Thyroid gland (tissue), 4 donors: ENCODE measurements at regions of chr5 and their contacts with region 1.

Region 1: DNA sequence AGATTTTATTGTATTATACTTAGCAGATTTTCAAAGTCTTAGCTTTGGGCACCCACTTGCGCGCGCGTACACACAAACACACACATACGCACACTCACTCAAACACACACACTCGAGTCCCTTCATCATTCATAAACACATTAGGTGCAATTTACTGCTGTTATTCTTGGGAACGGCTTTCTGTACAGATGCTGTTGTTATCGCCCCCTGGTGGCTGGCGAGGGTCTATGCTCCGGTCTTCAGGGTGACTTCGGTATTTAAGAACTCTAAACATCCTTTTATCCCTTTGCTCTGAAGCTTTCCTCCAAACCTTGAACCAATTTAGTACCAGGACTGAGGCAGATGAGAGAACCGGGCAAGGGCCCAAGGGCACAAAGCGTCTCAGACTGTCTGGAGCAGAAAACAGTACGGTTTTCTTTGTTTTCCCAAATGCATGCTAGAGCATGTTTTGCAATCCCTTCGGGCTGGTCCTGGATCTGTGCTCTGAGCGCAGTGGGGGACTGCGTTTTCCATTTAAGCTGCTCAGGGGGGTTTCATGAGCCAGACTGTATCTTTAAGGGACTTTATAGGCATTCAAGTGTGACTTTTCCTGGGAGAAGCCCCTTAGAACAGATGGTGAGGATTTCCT is 1.7 kb upstream of the SLIT3 start:
- DNase-seq: peak; percentile 74 to 88
- H3K4me3 ChIP-seq: no peak overlapping the region
- H3K27ac ChIP-seq: no peak overlapping the region
- H3K4me1 ChIP-seq: peaks cover 0 to 8% of the 10 kb centered on the region in 2 donors
- H3K27me3 ChIP-seq: no peaks in the 10 kb centered on the region
- CTCF ChIP-seq: peak; percentile 60 to 92 (median 80)
- POLR2A ChIP-seq: no peak

Region 2: DNA sequence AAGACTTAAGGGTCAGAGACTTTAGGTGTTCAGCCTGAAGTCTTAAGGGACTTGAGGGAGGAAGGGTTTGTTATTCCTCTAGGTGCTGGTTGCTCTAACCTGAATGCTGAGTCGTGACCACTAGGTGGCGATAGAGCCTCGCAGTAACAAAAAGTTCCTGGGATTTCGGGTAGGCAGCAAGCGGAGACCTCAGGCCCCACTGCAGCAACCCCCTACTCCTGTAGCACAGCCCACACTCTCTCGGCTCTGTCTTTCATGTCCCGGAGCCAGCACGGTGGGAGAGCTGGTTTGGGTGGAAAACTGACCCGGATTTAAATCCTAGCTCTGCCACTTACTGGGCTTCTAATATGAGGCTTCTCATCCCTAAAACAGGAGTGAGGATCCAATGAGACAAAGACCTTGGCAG is 623.1 kb before region 1 on chr5:
- intact Hi-C with region 1: loop called (anchors 10 kb)
- DNase-seq: peak; percentile 77 to 81
- H3K4me3 ChIP-seq: no peak overlapping the region
- H3K27ac ChIP-seq: no peak overlapping the region
- H3K4me1 ChIP-seq: peaks cover 4 to 8% of the 10 kb centered on the region in 2 donors
- H3K27me3 ChIP-seq: no peaks in the 10 kb centered on the region
- CTCF ChIP-seq: peak; percentile 62 to 89 (median 81)
- POLR2A ChIP-seq: no peak

Region 3: DNA sequence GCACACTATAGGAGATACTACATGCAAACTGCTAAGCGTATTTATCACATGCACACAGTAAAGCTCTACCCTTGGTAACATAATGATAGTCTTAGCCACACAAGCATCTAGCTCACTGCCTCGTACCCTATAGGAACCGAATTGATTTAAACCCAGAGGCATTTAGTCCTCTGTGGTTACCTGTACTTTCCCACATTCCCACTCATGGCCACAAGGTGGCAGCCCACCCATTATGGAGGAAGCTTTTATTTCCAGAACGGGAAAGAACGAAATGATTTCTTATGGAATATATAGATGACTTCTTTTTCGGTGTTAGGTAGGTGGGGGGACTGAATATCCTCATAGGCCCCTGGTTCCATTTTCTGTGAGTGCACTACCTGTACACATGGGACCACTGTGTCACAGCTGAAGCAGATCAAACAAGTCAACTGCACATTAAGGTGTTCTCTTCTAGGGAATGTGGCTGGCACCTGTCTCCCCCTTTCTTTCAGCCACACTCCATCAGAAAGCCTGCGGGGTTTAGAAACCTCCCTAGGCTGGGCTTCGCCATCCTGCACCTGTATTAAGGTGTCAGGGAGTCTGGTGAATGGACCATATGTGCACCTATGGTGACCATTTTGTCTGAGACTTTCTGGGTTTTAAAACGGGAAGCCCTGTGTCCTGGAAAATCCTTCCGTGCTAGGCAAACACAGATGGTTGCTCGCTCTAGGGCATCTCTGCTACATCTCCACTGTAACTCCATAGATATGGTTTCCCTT is 314.9 kb before region 1 on chr5:
- intact Hi-C with region 1: loop called (anchors 2 kb)
- DNase-seq: peak; percentile 78 to 83
- H3K4me3 ChIP-seq: no peak overlapping the region
- H3K27ac ChIP-seq: no peak overlapping the region
- H3K4me1 ChIP-seq: peaks cover 8 to 22% of the 10 kb centered on the region in 2 donors
- H3K27me3 ChIP-seq: no peaks in the 10 kb centered on the region
- CTCF ChIP-seq: peak; percentile 82 to 95 (median 86)
- POLR2A ChIP-seq: no peak

Region 4: GRCh38 chr5:169161022-169161680 is 141.5 kb before region 1 on chr5:
- intact Hi-C with region 1: loop called (anchors 10 kb)
- DNase-seq: peak; percentile 78 to 86
- H3K4me3 ChIP-seq: no peak overlapping the region
- H3K27ac ChIP-seq: peak overlapping the region; percentile 69 to 76 (median 74)
- H3K4me1 ChIP-seq: peaks cover 11 to 26% of the 10 kb centered on the region in 2 donors
- H3K27me3 ChIP-seq: no peaks in the 10 kb centered on the region
- CTCF ChIP-seq: no peak
- POLR2A ChIP-seq: no peak

Region 5: DNA sequence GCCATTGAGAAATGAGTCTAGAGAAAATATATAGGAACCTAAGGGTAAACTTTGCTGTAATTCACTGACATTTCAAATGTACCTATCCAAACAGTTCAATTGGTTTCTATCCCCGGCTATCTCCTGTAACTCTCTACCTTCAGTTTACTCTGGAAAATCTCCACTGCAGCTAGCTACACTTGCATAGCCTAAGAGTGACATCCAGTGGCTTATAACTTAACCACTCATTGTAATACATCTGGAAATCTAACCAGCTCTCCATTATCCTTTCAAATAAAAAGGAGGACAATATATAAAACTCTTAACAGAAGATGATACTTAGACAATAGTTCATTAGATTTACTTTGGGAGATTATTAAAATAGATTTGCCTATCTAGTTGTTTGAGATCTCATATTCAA is 245.7 kb after region 1 on chr5:
- intact Hi-C with region 1: loop called (anchors 10 kb)
- DNase-seq: no peak
- H3K4me3 ChIP-seq: no peak overlapping the region
- H3K27ac ChIP-seq: peak overlapping the region in 1 of 3 donors; percentile 32
- H3K4me1 ChIP-seq: peaks cover 5% of the 10 kb centered on the region in 2 donors
- H3K27me3 ChIP-seq: no peaks in the 10 kb centered on the region
- CTCF ChIP-seq: peak in 5 of 6 experiments; percentile 12 to 81 (median 55)
- POLR2A ChIP-seq: no peak

Region 6: DNA sequence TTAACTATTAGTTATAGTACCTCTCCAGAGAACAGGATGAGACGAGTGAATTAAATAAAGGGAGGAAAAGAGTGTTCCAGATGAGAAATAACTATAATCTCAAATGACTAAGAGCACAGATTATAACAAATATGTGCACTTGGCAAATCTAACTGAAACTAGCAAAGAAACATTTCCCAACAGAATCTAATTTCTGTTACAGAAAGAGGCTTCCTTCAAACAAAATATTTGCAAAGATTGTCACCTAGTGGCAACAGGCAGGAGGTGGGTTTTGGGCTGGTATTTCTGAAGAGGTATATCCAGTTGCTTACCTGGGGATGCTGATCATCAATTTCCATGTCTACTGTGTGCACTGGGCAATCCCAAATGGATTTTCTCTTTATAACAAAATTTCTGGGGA is 275.3 kb after region 1 on chr5:
- intact Hi-C with region 1: loop called (anchors 10 kb)
- DNase-seq: peak; percentile 39 to 40
- H3K4me3 ChIP-seq: no peak overlapping the region
- H3K27ac ChIP-seq: peak overlapping the region in 1 of 3 donors; percentile 2
- H3K4me1 ChIP-seq: peaks cover 12 to 22% of the 10 kb centered on the region in 2 donors
- H3K27me3 ChIP-seq: no peaks in the 10 kb centered on the region
- CTCF ChIP-seq: peak; percentile 11 to 73 (median 58)
- POLR2A ChIP-seq: no peak